CD8-positive, alpha-beta T cell (primary cell): ENCODE measurements at regions of chr12 and their contacts with region 1.

Region 1: GRCh38 chr12:47758834-47759690 is at the start of gene RAPGEF3:
- DNase-seq: peak in 8 of 9 experiments; percentile 54 to 81 (median 72)
- ATAC-seq: peak; percentile 78
- H3K4me3 ChIP-seq: peak within 1 kb of the TSS; percentile 59 to 61
- H3K4me3 Mint-ChIP-seq: peak within 1 kb of the TSS; percentile 79
- H3K27ac ChIP-seq: no peak within 1 kb of the TSS
- H3K27ac Mint-ChIP-seq: no peak within 1 kb of the TSS
- H3K4me1 ChIP-seq: peaks cover 12% of the 10 kb centered on the region
- H3K4me1 Mint-ChIP-seq: peaks cover 23% of the 10 kb centered on the region
- H3K27me3 ChIP-seq: peaks cover 0 to 6% of the 10 kb centered on the region in 2 experiments
- H3K27me3 Mint-ChIP-seq: no peaks in the 10 kb centered on the region
- CTCF ChIP-seq: peak; percentile 58
- total RNA-seq, gene RAPGEF3: 0.14 to 0.25 TPM

Region 2: GRCh38 chr12:47736877-47737676 is 22.0 kb before region 1 on chr12:
- CTCF ChIA-PET with region 1: interaction called, 201 read pairs
- POLR2A ChIA-PET with region 1: no interaction called
- intact Hi-C with region 1: no loop called
- DNase-seq: no peak
- ATAC-seq: no peak
- H3K4me3 ChIP-seq: no peak overlapping the region
- H3K4me3 Mint-ChIP-seq: no peak overlapping the region
- H3K27ac ChIP-seq: no peak overlapping the region
- H3K27ac Mint-ChIP-seq: no peak overlapping the region
- H3K4me1 ChIP-seq: peaks cover 19% of the 10 kb centered on the region
- H3K4me1 Mint-ChIP-seq: peaks cover 22% of the 10 kb centered on the region
- H3K27me3 ChIP-seq: no peaks in the 10 kb centered on the region
- H3K27me3 Mint-ChIP-seq: no peaks in the 10 kb centered on the region
- CTCF ChIP-seq: no peak

Region 3: GRCh38 chr12:47773062-47773857 is 14.2 kb after region 1 on chr12 and contains the start of gene SLC48A1:
- CTCF ChIA-PET with region 1: interaction called, 142 read pairs
- POLR2A ChIA-PET with region 1: interaction called, 13 read pairs
- intact Hi-C with region 1: loop called in 1 of 2 experiments (anchors 2 kb)
- DNase-seq: peak; percentile 50 to 85 (median 71)
- ATAC-seq: peak; percentile 93
- H3K4me3 ChIP-seq: peak within 1 kb of the TSS; percentile 43 to 58
- H3K4me3 Mint-ChIP-seq: peak within 1 kb of the TSS; percentile 85
- H3K27ac ChIP-seq: peak within 1 kb of the TSS in 1 of 2 experiments; percentile 24
- H3K27ac Mint-ChIP-seq: peak within 1 kb of the TSS; percentile 66
- H3K4me1 ChIP-seq: peaks cover 16% of the 10 kb centered on the region
- H3K4me1 Mint-ChIP-seq: peaks cover 14% of the 10 kb centered on the region
- H3K27me3 ChIP-seq: no peaks in the 10 kb centered on the region
- H3K27me3 Mint-ChIP-seq: no peaks in the 10 kb centered on the region
- CTCF ChIP-seq: no peak
- total RNA-seq, gene SLC48A1: 4.3 to 5.5 TPM